WTC11 (cell line): ENCODE measurements at regions of chr15 and their contacts with region 1.

Region 1: GRCh38 chr15:33021806-33022389 is 172.6 kb downstream of the FMN1 start:
- DNase-seq: no peak
- ATAC-seq: no peak
- H3K4me3 Mint-ChIP-seq: no peak overlapping the region
- H3K27ac Mint-ChIP-seq: peak overlapping the region; percentile 60; the same call in 1 of the 2 replicates
- H3K4me1 Mint-ChIP-seq: peaks cover 22% of the 10 kb centered on the region
- H3K27me3 Mint-ChIP-seq: no peaks in the 10 kb centered on the region
- CTCF ChIP-seq: peak; percentile 55

Region 2: GRCh38 chr15:32987067-32987466 is 34.8 kb before region 1 on chr15:
- CTCF ChIA-PET with region 1: no interaction called
- POLR2A ChIA-PET with region 1: no interaction called
- DNase-seq: no peak
- ATAC-seq: no peak
- H3K4me3 Mint-ChIP-seq: no peak overlapping the region
- H3K27ac Mint-ChIP-seq: no peak overlapping the region
- H3K4me1 Mint-ChIP-seq: no peaks in the 10 kb centered on the region
- H3K27me3 Mint-ChIP-seq: no peaks in the 10 kb centered on the region
- CTCF ChIP-seq: no peak

Region 3: GRCh38 chr15:33074942-33075341 is 53.0 kb after region 1 on chr15:
- CTCF ChIA-PET with region 1: interaction called, 24 read pairs
- POLR2A ChIA-PET with region 1: interaction called, 3 read pairs
- DNase-seq: no peak
- ATAC-seq: peak; percentile 86
- H3K4me3 Mint-ChIP-seq: no peak overlapping the region
- H3K27ac Mint-ChIP-seq: no peak overlapping the region
- H3K4me1 Mint-ChIP-seq: peaks cover 20% of the 10 kb centered on the region
- H3K27me3 Mint-ChIP-seq: no peaks in the 10 kb centered on the region; the same call in 1 of the 2 replicates
- CTCF ChIP-seq: no peak

Region 4: GRCh38 chr15:33132722-33133345 is 110.9 kb after region 1 on chr15:
- CTCF ChIA-PET with region 1: interaction called, 11 read pairs
- POLR2A ChIA-PET with region 1: no interaction called
- DNase-seq: no peak
- ATAC-seq: peak; percentile 92
- H3K4me3 Mint-ChIP-seq: no peak overlapping the region
- H3K27ac Mint-ChIP-seq: no peak overlapping the region
- H3K4me1 Mint-ChIP-seq: peaks cover 11% of the 10 kb centered on the region
- H3K27me3 Mint-ChIP-seq: peaks cover 2% of the 10 kb centered on the region; the same call in 1 of the 2 replicates
- CTCF ChIP-seq: 0 out of 2 replicates have a peak, but pooled peaks have one; percentile 26